ENCODE measurements at regions of chr18 and their contacts with region 1.

Region 1: GRCh38 chr18:3623769-3624545 is 174.0 kb downstream of the TGIF1 start:
- DNase-seq: peak; percentile 95
- H3K4me3 Mint-ChIP-seq: peak overlapping the region; percentile 74
- H3K27ac Mint-ChIP-seq: peak overlapping the region; percentile 99
- H3K4me1 Mint-ChIP-seq: peaks cover 35% of the 10 kb centered on the region
- H3K27me3 Mint-ChIP-seq: no peaks in the 10 kb centered on the region
- CTCF ChIP-seq: no peak

Region 2: DNA sequence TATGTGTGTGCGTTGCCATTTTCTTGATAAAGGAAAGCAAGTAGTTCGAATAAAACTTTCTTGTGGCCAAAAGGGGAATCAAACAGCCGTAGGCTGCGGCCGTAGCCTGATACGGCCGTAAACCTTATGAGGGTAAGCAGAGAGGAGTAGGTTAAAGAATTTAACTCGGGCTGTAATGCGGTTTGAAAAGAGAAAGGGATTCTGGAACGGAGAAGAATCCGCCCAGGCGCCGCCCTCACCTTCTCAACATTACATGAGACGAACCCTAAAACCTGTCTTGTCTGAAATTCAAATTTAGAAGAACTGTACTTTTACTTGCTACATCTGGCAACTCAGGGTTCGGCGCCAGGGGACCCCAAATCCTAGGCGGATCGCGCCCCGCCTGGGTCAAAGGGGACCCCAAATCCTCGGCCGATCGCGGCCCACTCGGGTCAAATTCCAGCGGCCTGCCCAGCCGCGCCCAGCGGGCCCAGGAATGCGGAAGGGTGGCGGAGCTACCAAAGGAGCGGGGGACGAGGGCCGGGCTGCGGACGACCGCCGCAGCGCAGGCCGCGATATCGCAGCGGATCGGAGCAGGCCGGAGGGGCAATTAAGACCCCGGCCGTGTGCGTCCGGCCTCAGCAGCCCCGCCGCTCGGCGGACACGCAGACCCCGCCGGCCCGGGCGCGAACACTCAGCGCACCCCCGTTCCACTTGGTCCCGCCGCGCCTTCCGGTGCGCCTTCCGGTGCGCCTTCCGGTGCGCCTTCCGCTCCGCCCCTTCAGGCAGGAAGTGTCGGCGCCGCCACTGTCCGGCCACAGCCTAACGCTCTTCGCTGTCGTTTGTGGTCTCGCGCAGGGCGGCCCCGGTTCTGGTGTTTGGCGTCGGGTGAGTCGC is 362.3 kb before region 1 on chr18 and contains the start of gene MYL12B:
- CTCF ChIA-PET with region 1: no interaction called
- POLR2A ChIA-PET with region 1: interaction called, 14 read pairs
- intact Hi-C with region 1: no loop called
- DNase-seq: peak; percentile 78
- H3K4me3 Mint-ChIP-seq: peak within 1 kb of the TSS; percentile 80
- H3K27ac Mint-ChIP-seq: peak within 1 kb of the TSS; percentile 82
- H3K4me1 Mint-ChIP-seq: peaks cover 43% of the 10 kb centered on the region
- H3K27me3 Mint-ChIP-seq: no peaks in the 10 kb centered on the region
- CTCF ChIP-seq: no peak
- total RNA-seq, gene MYL12B: 175 and 229 TPM in 2 replicates

Region 3: DNA sequence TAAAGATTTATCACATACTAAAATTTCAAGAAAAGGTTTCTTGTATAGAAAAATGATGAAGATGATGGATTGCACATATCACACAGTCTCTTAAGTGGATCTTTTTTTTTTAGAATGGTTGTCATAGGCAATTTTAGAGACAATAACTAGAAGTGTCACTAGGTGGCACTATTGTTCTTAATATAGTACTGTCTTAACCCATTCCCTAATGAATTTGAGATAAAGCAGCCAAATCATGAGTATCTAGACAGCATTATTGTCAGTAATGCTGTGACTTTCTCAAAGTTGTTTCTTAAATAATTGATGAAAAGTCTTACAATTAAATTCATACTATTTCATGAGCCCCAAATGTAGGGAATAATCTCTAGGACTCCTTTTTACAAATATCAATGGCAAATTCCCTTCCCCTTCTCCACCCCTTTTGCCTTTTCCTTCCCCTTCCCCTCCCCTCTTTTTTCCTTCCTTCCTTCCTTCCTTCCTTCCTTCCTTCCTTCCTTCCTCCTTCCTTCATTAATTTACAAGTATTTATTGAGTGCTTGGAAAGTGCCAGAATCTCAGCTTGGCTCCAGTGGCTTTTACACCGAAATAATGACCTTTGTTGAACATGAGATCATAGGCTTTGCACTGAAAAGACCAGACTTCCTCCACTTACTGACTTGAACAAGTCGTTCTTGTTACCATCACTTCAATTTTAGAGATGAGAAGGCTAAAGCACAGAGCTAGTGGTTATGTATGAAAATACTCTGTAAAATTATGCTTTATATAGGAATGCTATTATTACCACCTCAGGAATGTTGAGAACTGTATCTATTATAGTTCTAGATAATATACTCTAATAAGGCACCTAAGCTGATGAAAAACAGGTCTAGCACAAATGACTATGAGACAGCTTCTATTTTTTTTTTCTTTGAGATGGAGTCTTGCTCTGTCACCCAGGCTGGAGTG is 342.2 kb before region 1 on chr18:
- CTCF ChIA-PET with region 1: interaction called, 3 read pairs
- POLR2A ChIA-PET with region 1: no interaction called
- intact Hi-C with region 1: loop called (anchors 1 kb)
- DNase-seq: peak; percentile 80
- H3K4me3 Mint-ChIP-seq: no peak overlapping the region
- H3K27ac Mint-ChIP-seq: no peak overlapping the region
- H3K4me1 Mint-ChIP-seq: peaks cover 6% of the 10 kb centered on the region
- H3K27me3 Mint-ChIP-seq: no peaks in the 10 kb centered on the region
- CTCF ChIP-seq: peak; percentile 52

Region 4: DNA sequence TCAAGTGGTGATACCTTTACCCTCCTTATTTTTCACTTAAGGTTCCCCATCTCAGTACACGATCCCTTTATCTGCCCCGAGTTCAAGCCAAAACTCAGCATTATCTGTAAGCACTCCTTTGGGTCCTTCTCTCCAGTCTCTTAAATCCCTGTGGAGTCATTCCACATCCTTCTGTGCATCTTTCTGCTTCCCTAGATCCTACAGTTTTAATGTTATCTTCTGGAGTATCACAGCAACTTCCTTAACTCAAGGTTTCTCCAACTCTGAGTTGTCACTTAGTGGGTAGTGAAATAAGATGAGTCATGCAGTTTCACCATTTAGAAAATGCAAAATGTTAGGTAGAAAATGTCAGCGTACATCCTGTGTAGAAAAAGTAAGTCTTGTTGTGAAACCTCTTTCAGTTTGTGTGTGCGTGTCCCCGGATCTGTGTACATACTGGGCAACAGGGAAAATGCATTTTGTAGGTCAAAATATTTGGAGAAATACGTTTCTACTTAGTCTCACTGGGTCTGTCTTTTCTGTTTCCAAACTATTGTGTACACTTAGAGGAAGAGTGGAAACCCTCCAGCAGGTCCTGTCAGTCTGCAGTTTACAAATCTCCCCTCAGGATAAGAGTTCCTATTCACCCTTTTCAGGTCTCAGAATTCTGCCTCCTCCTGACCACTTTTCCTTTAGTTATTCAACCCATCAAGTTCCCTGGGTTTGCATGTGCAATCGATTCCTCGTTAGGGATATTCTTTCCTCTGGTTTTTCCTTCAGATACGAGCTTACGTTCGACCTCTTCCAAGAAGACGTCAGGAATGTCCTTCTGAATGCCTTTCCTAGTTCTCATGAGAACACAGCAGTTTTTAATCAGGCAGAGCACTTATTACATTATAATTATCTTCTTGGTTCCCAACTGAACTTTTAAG is 19.2 kb before region 1 on chr18:
- CTCF ChIA-PET with region 1: interaction called, 14 read pairs
- POLR2A ChIA-PET with region 1: interaction called, 184 read pairs
- intact Hi-C with region 1: loop called (anchors 1 kb)
- DNase-seq: peak; percentile 91
- H3K4me3 Mint-ChIP-seq: no peak overlapping the region
- H3K27ac Mint-ChIP-seq: no peak overlapping the region
- H3K4me1 Mint-ChIP-seq: no peaks in the 10 kb centered on the region
- H3K27me3 Mint-ChIP-seq: no peaks in the 10 kb centered on the region
- CTCF ChIP-seq: no peak

Region 5: DNA sequence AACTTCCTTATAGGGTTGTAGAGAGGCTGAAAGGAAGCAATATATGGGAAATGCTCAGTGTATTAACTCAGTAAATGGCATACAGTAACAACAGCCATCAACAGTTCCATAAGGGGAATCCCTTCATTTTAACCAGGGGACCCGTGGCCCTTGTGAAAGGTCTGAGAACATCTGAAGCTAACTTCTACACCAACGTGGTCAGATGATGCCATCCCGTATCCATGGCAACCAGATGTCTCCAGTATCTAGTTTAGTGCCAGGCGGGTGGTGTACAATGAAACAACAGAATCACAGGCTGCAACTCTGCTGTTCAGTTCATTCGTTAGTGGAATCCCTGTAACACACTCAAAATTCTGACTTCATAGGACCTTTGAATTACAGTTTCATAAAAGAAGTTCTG is 11.6 kb before region 1 on chr18:
- CTCF ChIA-PET with region 1: interaction called, 14 read pairs
- POLR2A ChIA-PET with region 1: interaction called, 184 read pairs
- intact Hi-C with region 1: no loop called
- DNase-seq: no peak
- H3K4me3 Mint-ChIP-seq: no peak overlapping the region
- H3K27ac Mint-ChIP-seq: no peak overlapping the region
- H3K4me1 Mint-ChIP-seq: no peaks in the 10 kb centered on the region
- H3K27me3 Mint-ChIP-seq: no peaks in the 10 kb centered on the region
- CTCF ChIP-seq: no peak

Region 6: GRCh38 chr18:3652380-3653262 is 28.7 kb after region 1 on chr18:
- CTCF ChIA-PET with region 1: interaction called, 14 read pairs
- POLR2A ChIA-PET with region 1: interaction called, 171 read pairs
- intact Hi-C with region 1: loop called (anchors 1 kb)
- DNase-seq: peak; percentile 99
- H3K4me3 Mint-ChIP-seq: peak overlapping the region; percentile 4
- H3K27ac Mint-ChIP-seq: peak overlapping the region; percentile 91
- H3K4me1 Mint-ChIP-seq: peaks cover 41% of the 10 kb centered on the region
- H3K27me3 Mint-ChIP-seq: no peaks in the 10 kb centered on the region
- CTCF ChIP-seq: peak; percentile 13

Region 7: DNA sequence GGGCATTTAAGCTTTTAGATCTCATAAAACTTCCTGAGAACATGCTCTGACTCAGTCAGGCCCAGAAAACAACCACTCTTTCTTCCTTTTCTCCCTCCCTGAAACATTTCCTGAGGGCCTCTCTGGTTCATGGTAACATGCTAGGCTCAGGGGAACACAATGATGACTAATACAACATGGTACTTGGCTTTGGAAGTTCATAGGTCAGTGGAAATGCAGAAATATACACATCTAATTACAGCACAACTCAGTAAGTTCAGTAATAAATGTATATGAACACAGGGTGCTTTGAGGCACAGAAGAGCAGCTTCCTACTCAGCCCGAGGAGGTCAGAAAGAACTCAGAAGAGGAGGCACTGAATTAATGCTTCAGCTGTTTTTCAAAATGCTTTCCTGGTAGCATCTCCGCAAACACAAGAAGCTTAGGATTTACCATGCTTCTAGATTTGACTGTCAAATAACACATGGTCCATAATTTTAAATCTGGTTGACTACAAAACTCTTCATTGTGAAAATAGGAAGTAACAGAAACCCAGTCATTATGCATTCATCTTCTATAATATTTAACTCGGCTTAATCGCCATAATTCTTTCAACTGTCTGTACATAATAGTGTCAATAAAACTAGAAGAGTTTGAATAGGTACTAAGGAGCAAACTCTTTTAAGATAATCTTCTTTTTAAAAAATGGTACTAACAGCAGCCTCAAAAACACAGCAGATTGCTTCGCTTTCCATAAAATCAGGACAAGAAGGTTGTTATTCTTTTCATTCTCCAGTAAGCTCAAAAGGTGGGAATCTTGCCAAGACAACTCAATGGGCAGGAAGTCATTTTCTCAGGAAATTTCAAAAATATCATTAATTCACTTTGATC is 579.8 kb after region 1 on chr18:
- CTCF ChIA-PET with region 1: no interaction called
- POLR2A ChIA-PET with region 1: no interaction called
- intact Hi-C with region 1: no loop called
- DNase-seq: no peak
- H3K4me3 Mint-ChIP-seq: no peak overlapping the region
- H3K27ac Mint-ChIP-seq: no peak overlapping the region
- H3K4me1 Mint-ChIP-seq: peaks cover 5% of the 10 kb centered on the region
- H3K27me3 Mint-ChIP-seq: peaks cover 40% of the 10 kb centered on the region
- CTCF ChIP-seq: no peak